Breast epithelium (tissue), 4 donors: ENCODE measurements at regions of chr3 and their contacts with region 1.

Region 1: DNA sequence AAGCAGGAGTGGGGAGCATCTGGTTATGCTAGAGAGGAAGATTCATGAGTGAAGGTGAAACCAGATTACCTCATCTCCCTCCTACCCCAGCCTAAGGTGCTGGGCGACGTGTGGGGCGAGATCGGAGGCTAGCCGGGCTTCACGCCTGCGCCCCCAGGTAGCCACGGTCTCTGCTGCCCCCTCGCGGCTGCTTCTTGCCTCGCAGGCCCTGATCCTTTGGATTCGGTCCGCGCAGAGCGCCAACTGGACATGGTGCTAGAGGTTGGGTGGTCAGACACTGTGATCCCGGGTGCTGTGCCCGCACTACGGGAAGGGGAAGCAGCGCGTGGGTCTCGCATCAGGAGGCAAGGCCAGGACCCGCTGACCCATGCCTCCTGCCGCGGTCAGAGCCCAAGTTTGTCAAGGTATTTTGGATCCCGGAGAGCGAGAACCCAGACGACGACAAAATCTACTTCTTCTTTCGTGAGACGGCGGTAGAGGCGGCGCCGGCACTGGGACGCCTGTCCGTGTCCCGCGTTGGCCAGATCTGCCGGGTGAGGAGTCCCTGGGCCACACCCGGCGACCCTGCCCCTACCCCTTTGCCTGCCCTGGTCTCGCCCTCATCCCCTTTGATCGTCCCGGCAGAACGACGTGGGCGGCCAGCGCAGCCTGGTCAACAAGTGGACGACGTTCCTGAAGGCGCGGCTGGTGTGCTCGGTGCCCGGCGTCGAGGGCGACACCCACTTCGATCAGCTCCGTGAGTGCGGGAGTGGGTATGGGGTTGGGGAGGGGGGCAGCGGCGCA is 4.2 kb downstream of the SEMA3B start:
- DNase-seq: peak; percentile 76 to 92
- H3K4me3 ChIP-seq: peak overlapping the region; percentile 21 to 65 (median 47)
- H3K27ac ChIP-seq: no peak overlapping the region
- H3K4me1 ChIP-seq: peaks cover 17% of the 10 kb centered on the region in 2 donors
- H3K27me3 ChIP-seq: no peaks in the 10 kb centered on the region
- CTCF ChIP-seq: peak; percentile 99 to 100 (median 99)
- POLR2A ChIP-seq: no peak

Region 2: DNA sequence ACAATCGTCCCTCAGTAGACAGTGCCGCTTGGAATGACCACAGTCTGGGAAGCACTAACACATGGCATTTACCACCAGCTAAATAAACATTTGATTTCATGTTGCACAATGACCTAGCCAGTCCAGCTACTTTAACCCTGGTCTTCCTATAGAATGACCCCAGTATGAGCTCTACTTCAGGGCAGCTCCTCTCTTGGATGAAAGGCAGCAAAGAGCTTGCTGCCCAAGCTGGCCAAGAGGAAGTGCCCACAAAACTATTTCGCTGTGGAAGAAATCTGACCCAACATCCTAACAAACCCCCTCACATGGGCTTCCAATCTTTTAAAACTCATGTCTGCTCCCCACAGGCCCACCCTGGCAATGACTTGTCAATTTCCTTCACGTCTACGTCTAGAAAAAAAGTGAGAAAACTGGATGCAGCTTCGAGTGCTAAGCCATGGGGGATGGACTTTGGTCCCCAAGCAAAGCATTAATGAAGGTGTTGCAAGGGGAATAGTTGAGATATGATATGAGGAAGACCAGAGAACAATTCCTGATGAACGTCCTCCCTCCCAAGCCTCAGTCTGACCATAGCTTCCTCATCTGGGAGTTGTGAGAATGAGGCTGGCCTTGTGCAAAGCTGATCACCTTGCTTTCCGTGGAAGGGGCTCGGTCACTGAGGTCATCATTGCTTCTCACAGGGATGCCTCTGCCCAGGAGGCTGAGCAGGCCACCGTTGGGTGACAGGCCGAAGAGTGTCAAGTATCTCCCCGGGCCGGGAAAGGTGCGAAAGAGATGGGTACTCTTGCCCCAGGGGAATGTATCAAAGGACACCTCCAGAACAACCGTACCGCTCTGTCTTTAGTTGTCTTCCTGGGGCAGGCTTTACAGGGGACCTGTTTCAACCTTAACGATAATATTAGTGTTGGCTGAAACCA is 1375.4 kb before region 1 on chr3:
- intact Hi-C with region 1: no loop called
- DNase-seq: no peak
- H3K4me3 ChIP-seq: peak overlapping the region; percentile 60 to 81 (median 75)
- H3K27ac ChIP-seq: peak overlapping the region; percentile 76 to 81
- H3K4me1 ChIP-seq: peaks cover 0 to 7% of the 10 kb centered on the region in 2 donors
- H3K27me3 ChIP-seq: no peaks in the 10 kb centered on the region
- CTCF ChIP-seq: no peak
- POLR2A ChIP-seq: no peak

Region 3: DNA sequence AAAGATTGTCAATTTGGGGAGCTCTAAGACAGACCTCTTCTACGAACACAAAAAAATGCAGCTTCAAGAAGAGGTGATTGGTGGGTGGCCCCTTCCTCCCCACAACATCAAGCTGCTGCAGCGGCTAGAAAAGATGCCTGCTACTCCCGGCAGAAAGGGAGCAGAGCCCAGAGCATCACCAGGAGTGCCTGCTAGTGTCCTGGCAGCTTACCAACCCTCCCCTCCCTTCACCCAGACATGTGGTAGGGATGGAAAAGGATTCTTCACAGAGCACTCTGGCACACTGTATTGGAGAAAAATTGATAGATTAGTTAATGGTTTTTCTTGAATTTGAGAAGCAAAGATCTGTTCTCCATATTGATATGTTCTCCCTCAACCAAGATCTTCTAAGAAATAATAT is 497.6 kb before region 1 on chr3:
- intact Hi-C with region 1: no loop called
- DNase-seq: no peak
- H3K4me3 ChIP-seq: no peak overlapping the region
- H3K27ac ChIP-seq: no peak overlapping the region
- H3K4me1 ChIP-seq: peaks cover 0 to 5% of the 10 kb centered on the region in 2 donors
- H3K27me3 ChIP-seq: no peaks in the 10 kb centered on the region
- CTCF ChIP-seq: no peak
- POLR2A ChIP-seq: no peak

Region 4: DNA sequence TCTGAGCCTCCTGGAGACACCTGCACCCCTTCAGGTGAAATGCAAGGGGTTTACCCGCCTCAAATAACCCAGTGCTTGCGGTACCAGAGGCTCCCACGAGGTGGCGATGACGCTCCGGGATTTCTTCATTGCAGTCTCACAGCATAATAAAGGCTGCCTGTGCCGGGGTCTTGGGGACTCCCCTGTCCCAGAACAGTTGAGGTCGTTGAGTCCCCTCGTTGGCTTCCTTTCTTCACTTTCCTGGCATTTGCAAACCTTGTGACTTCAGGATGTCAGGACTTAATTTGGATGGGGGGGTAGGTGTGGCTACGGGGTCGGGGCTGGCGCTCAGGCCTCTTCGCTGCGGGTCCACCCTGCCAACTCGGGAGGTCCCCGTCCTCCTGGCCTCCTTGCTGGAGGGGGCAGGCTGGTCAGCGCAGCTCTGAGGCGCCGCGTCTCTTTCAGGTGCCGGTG is 80.4 kb before region 1 on chr3:
- intact Hi-C with region 1: loop called (anchors 1 kb)
- DNase-seq: peak; percentile 51 to 79
- H3K4me3 ChIP-seq: peak overlapping the region in 1 of 3 donors; percentile 47
- H3K27ac ChIP-seq: no peak overlapping the region
- H3K4me1 ChIP-seq: peaks cover 0 to 4% of the 10 kb centered on the region in 2 donors
- H3K27me3 ChIP-seq: peaks cover 14 to 30% of the 10 kb centered on the region in 2 donors
- CTCF ChIP-seq: peak; percentile 84 to 94 (median 87)
- POLR2A ChIP-seq: no peak

Region 5: DNA sequence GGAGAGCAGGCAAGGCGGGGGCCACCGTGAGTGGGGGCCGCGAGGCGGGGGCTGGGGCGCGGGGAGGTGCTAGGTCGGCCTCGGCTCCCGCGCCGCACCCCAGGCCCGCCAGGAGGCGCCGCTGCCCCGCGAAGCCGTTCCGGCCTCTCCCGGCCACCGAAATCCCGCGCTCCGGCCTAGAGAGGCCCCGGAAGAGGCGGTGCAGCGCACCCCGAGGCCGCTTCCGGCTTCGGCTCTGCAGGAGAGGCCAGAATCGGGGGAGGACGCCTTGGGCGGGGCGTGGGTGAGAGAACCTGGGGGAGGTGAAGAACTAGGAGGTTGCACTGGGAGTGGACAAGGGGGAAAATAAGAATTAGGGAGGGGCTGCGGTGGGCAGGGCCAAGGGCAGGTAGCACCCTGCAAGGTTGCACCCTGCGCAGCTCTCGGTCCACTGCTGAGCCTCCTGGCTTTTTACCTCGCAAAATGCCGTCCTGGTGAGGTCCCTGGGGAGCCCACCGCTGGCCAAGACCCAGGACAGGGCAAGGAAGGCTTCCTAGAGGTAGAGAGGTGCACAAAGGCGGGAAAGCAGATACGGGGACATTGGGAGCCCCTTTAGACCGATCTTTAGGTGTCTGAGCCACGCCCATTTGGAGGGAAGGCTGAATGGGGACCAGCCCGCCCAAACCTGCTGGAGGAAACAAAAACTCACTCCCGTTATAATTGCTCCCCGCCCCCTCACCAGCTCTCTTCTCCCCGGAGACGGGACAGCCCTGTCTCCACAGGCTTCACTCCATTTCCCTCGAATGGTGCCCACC is 45.5 kb before region 1 on chr3:
- intact Hi-C with region 1: loop called (anchors 2 kb)
- DNase-seq: peak; percentile 93 to 94
- H3K4me3 ChIP-seq: peak overlapping the region; percentile 59 to 71 (median 71)
- H3K27ac ChIP-seq: peak overlapping the region; percentile 71 to 77
- H3K4me1 ChIP-seq: peaks cover 0 to 3% of the 10 kb centered on the region in 2 donors
- H3K27me3 ChIP-seq: no peaks in the 10 kb centered on the region
- CTCF ChIP-seq: peak; percentile 54 to 78 (median 66)
- POLR2A ChIP-seq: no peak

Region 6: DNA sequence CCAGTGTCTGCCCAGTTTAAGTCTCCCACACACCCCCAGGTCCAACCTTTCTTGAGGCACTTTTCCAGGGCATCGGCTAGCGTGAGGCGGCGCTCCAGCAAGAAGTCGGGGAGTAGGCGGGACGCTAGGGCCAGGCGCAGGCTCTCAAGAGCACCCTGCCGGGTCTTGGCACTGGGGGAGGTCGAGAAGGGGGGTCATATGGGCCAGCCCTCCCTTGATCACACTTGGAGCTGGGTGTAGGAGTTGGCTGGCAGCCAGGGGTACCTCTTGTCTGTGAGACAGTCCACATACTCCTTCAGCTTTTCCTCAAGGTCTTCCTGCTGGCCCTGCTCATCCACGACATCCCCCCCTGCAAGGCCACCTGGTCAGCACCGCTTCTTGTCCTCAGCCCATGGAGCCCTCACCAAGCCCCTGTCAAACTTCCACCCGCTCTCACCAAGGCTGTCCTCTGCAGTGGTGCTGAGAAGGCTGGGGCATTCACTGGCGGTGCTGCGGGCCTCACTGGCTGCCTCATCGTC is 17.1 kb after region 1 on chr3:
- intact Hi-C with region 1: no loop called
- DNase-seq: no peak
- H3K4me3 ChIP-seq: no peak overlapping the region
- H3K27ac ChIP-seq: peak overlapping the region in 1 of 2 donors; percentile 12
- H3K4me1 ChIP-seq: peaks cover 5% of the 10 kb centered on the region in 2 donors
- H3K27me3 ChIP-seq: no peaks in the 10 kb centered on the region
- CTCF ChIP-seq: no peak
- POLR2A ChIP-seq: no peak

Region 7: GRCh38 chr3:50337191-50337841 is 64.2 kb after region 1 on chr3:
- intact Hi-C with region 1: no loop called
- DNase-seq: peak; percentile 99 to 100
- H3K4me3 ChIP-seq: peak overlapping the region; percentile 65 to 84 (median 68)
- H3K27ac ChIP-seq: peak overlapping the region; percentile 96 to 99
- H3K4me1 ChIP-seq: peaks cover 19 to 23% of the 10 kb centered on the region in 2 donors
- H3K27me3 ChIP-seq: no peaks in the 10 kb centered on the region
- CTCF ChIP-seq: peak in 1 of 3 donors; percentile 31
- POLR2A ChIP-seq: peak; percentile 57